ENCODE measurements at regions of chr11 and their contacts with region 1.

Region 1: DNA sequence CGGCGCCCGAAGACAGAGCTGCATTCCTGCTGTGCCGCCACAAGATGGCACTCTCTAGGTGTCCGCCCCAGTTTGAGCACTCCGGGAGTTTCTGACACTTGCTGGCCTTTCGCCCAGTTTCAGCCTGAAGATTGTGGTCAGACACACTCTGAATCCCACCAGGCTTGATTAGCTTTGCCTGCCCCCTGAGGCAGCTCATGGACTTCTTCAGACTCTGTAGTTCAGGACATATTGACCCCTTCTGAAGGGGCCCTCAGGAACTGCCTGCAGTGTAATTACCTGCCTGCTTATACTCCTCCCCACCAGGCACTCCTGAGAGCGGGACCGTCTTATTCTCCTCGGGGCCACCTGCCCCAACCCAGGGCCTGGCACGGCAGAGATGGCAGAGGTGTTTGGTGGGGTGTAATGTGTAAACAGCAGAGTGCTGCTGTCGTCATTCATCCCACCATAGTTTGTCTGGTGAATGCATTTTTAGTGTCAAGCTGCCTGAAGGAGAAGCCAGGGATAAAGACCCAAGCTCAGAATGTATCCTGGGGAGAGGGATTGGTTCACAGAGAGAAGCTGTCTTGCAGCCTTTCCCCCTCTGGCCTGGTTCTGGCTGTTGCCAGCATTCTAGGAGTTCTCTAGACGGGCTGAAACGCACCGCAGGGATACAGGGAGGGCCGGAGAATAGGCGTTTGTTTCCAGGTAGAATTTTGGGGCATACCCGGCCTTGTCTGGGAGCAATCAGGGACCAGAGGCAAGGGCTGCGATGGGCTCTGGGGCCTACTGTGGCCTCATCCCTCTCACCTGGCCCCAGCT is 46.4 kb downstream of the EIF3F start:
- DNase-seq: no peak
- H3K4me3 ChIP-seq: no peak overlapping the region
- H3K27me3 ChIP-seq: no peaks in the 10 kb centered on the region
- CTCF ChIP-seq: peak; percentile 93

Region 2: GRCh38 chr11:7927635-7928034 is 105.9 kb before region 1 on chr11:
- CTCF ChIA-PET with region 1: no interaction called
- POLR2A ChIA-PET with region 1: no interaction called
- DNase-seq: no peak
- H3K4me3 ChIP-seq: no peak overlapping the region
- H3K27me3 ChIP-seq: no peaks in the 10 kb centered on the region
- CTCF ChIP-seq: no peak

Region 3: GRCh38 chr11:8018484-8019313 is 14.8 kb before region 1 on chr11:
- CTCF ChIA-PET with region 1: interaction called, 45 read pairs
- POLR2A ChIA-PET with region 1: no interaction called
- DNase-seq: no peak
- H3K4me3 ChIP-seq: peak overlapping the region; percentile 47
- H3K27me3 ChIP-seq: no peaks in the 10 kb centered on the region
- CTCF ChIP-seq: no peak

Region 4: DNA sequence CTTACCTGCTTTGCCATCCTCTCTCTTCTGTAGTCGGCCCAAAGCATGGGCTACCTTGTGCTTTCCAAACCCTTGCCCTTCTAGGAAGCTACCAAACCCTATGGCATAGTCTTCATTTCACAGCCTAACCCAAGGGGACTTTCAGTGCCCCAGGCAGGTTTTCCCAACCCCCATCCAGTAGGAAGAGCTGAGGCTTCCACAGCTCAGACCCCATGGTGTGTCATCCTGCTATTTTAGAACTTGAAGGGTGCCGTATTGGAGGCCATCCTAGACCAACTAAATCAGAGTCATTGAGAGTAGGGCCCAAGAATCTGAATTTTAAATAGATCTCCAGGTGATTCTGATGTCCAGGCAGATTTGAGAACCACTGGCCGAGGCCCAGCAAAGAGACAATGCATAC is 15.6 kb after region 1 on chr11:
- CTCF ChIA-PET with region 1: interaction called, 16 read pairs
- POLR2A ChIA-PET with region 1: no interaction called
- DNase-seq: no peak
- H3K4me3 ChIP-seq: no peak overlapping the region
- H3K27me3 ChIP-seq: no peaks in the 10 kb centered on the region
- CTCF ChIP-seq: no peak

Region 5: GRCh38 chr11:8070417-8071115 is 37.1 kb after region 1 on chr11:
- CTCF ChIA-PET with region 1: interaction called, 21 read pairs
- POLR2A ChIA-PET with region 1: no interaction called
- DNase-seq: no peak
- H3K4me3 ChIP-seq: no peak overlapping the region
- H3K27me3 ChIP-seq: no peaks in the 10 kb centered on the region
- CTCF ChIP-seq: peak; percentile 50

Region 6: DNA sequence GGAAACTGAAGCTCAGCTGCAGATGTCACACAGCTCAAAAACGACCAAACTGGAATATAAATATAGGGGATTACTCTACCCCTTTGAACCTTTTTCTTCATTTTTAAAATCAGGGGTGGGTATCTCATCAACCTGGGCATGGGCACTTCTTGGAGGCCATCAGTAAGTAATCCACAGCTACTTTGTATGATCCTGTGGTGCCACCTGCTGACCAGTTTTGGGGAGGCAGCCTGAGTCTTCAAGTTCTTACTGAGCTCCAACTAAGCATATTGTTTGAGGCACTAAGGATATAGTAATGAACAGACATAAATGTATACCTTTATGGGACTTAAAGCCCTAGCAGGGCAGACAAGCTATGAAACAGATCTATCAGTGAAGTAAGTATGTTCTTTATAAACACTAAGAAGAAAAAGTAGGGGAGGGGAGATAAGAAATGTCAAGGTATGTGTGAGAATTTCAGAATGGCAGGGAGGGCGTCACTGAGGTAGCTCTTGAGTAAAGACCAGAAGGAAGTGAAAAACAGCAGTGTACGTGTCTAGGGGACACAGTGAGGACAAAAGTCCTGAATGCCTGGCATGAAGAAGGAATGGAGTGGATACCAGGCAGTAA is 65.9 kb after region 1 on chr11:
- CTCF ChIA-PET with region 1: interaction called, 441 read pairs
- POLR2A ChIA-PET with region 1: no interaction called
- DNase-seq: peak; percentile 26
- H3K4me3 ChIP-seq: no peak overlapping the region
- H3K27me3 ChIP-seq: no peaks in the 10 kb centered on the region
- CTCF ChIP-seq: peak; percentile 82

Measured in BJ (cell line).